BJ (cell line): ENCODE measurements at regions of chr22 and their contacts with region 1.

Region 1: GRCh38 chr22:29625090-29625825 is 21.8 kb downstream of the NF2 start:
- DNase-seq: peak; percentile 55
- H3K4me3 ChIP-seq: no peak overlapping the region
- H3K27me3 ChIP-seq: no peaks in the 10 kb centered on the region
- CTCF ChIP-seq: peak; percentile 88

Region 2: DNA sequence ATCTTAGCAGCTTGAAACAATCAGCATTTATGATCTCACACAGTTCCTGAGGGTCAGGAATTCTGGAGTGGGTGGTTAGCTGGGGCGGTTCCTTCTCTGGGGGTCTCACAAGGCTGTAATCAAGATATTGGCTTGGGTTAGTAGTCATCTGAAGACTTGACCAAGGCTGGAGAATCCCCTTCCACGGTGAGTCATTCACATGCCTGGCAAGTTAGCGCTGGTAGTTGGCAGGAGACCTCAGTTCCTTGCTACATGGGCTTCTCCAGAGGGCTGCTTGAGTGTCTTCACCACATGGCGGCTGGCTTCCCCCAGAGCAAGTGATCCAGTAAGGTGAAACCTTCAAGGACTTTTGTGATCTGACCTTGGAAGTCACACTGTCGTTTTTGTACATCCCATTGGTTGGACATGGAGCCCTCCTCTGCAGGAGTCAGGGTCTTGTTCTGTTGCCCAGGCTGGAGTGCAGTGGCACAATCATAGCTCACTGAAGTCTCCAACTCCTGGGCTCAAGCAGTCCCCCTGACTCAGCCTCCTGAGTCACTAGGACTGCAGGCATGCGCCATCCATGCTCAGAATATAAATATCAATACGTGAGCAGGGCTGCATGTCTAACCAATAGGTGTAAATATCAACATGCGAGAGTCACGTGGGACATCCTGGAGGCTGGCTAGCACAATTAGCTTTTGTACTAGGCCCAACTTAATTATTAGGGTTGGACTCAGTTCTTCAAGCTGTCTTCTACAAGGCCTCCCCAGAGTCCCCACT is 37.1 kb before region 1 on chr22:
- CTCF ChIA-PET with region 1: interaction called, 29 read pairs
- POLR2A ChIA-PET with region 1: no interaction called
- DNase-seq: peak; percentile 32
- H3K4me3 ChIP-seq: no peak overlapping the region
- H3K27me3 ChIP-seq: no peaks in the 10 kb centered on the region
- CTCF ChIP-seq: no peak

Region 3: GRCh38 chr22:29603358-29604075 is 21.7 kb before region 1 on chr22 and contains the start of gene NF2:
- CTCF ChIA-PET with region 1: interaction called, 24 read pairs
- POLR2A ChIA-PET with region 1: no interaction called
- DNase-seq: peak; percentile 97
- H3K4me3 ChIP-seq: peak within 1 kb of the TSS; percentile 85
- H3K27me3 ChIP-seq: no peaks in the 10 kb centered on the region
- CTCF ChIP-seq: no peak
- polyA plus RNA-seq, gene NF2: 36.0 and 41.9 TPM in 2 replicates

Region 4: DNA sequence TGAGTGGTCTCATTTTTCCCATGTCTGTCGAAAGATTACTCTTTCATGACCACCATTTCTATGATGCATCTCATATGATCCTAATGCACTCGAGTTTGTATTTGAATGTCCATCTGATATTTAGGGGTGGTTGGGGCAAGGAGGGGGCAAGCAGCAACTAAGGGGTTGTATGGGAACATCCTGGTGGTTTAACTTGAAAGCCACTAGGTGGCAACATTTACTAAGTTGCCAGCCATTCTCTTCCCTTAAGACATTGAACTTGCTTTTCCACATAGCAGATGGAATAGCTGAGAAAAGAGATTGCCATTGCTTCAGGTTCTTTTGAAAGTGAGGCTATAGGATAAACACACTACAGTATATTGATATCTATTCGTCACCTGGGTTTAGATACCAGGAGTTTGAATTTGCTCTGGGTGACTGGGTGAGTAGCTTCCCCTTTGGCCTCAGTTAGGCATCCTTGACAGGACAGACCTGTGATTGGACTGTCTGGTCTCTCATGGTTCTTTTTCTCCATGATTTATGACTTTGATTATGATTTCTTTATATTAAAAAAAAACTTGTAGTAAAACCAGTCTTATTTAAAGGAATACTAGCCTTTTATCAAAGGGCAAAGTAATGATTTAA is 10.6 kb after region 1 on chr22:
- CTCF ChIA-PET with region 1: interaction called, 26 read pairs
- POLR2A ChIA-PET with region 1: no interaction called
- DNase-seq: no peak
- H3K4me3 ChIP-seq: no peak overlapping the region
- H3K27me3 ChIP-seq: no peaks in the 10 kb centered on the region
- CTCF ChIP-seq: peak; percentile 75

Region 5: GRCh38 chr22:29683536-29683935 is 58.3 kb after region 1 on chr22:
- CTCF ChIA-PET with region 1: no interaction called
- POLR2A ChIA-PET with region 1: no interaction called
- DNase-seq: no peak
- H3K4me3 ChIP-seq: no peak overlapping the region
- H3K27me3 ChIP-seq: no peaks in the 10 kb centered on the region
- CTCF ChIP-seq: no peak

Region 6: GRCh38 chr22:30015846-30016245 is 390.6 kb after region 1 on chr22:
- CTCF ChIA-PET with region 1: interaction called, 11 read pairs
- POLR2A ChIA-PET with region 1: no interaction called
- DNase-seq: peak; percentile 55
- H3K4me3 ChIP-seq: no peak overlapping the region
- H3K27me3 ChIP-seq: no peaks in the 10 kb centered on the region
- CTCF ChIP-seq: no peak